ENCODE measurements at regions of chr7 and their contacts with region 1.

Region 1: GRCh38 chr7:5694912-5695726 is 86.3 kb downstream of the RNF216 start:
- DNase-seq: peak; percentile 80
- H3K4me3 ChIP-seq: peak overlapping the region; percentile 45
- H3K27ac ChIP-seq: peak overlapping the region; percentile 99
- H3K27me3 ChIP-seq: no peaks in the 10 kb centered on the region
- CTCF ChIP-seq: no peak

Region 2: GRCh38 chr7:5636914-5637313 is 58.2 kb before region 1 on chr7:
- CTCF ChIA-PET with region 1: no interaction called
- POLR2A ChIA-PET with region 1: interaction called, 12 read pairs
- DNase-seq: peak; percentile 61
- H3K4me3 ChIP-seq: no peak overlapping the region
- H3K27ac ChIP-seq: peak overlapping the region; percentile 49
- H3K27me3 ChIP-seq: no peaks in the 10 kb centered on the region
- CTCF ChIP-seq: no peak

Measured in AG04450 (cell line).